SK-N-SH (cell line): ENCODE measurements at regions of chr3 and their contacts with region 1.

Region 1: DNA sequence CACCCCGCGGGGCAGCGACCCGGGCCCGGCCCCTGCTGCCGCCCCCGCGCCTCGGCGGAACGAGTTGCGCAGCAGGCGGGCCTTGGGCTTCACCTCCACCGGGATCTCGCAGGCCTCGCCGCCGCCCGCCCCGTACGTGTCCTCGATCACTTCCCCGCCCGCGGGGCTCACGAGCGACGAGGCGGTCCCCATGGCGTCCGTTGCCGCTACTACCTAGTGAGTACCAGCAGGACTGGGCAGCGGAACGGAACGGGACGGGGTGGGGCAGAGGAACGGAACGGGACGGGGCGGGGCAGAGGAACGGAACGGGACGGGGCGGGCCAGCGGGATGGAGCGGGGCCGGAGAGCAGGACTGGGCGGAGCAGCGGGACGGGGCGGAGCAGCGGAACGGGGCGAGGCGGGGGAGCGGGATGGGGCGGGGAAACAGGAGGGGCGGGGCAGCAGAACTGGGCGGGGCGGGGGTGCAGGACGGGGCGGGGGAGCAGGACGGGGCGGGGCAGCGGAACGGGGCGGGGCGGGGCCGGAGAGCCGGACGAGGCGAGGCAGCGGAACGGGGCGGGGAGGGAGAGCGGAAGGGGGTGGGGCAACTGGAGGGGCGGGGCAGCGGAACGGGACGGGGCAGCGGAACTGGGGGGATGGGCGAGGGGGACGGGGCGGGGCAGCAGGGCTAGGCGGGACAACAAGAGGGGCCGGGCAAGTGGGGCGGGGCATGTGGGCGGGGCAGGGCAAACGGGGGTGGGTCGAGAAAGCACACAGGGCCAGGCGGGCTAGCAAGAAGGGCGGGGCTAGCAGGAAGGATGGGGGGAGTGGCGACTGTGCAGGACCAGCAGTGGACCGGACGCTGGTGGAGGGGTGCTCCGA is at the start of gene NPHP3:
- DNase-seq: peak; percentile 98
- H3K4me3 ChIP-seq: peak within 1 kb of the TSS; percentile 83 to 84
- H3K27ac ChIP-seq: peak within 1 kb of the TSS; percentile 85 to 96
- H3K4me1 ChIP-seq: peaks cover 4 to 5% of the 10 kb centered on the region in 2 experiments; a peak in 3 of 4 replicates
- H3K27me3 ChIP-seq: no peaks in the 10 kb centered on the region
- CTCF ChIP-seq: no peak; the same call in 1 of the 2 replicates
- EP300 ChIP-seq: no peak
- RAD21 ChIP-seq: no peak
- polyA plus RNA-seq, gene NPHP3: 19.0 and 27.4 TPM in 2 replicates

Region 2: GRCh38 chr3:132738314-132738713 is 15.9 kb after region 1 on chr3:
- CTCF ChIA-PET with region 1: interaction called, 13 read pairs
- POLR2A ChIA-PET with region 1: no interaction called
- DNase-seq: no peak
- H3K4me3 ChIP-seq: no peak overlapping the region
- H3K27ac ChIP-seq: no peak overlapping the region
- H3K4me1 ChIP-seq: no peaks in the 10 kb centered on the region
- H3K27me3 ChIP-seq: 0 out of 2 replicates have a peak, but pooled peaks cover 6% of the 10 kb centered on the region
- CTCF ChIP-seq: no peak
- EP300 ChIP-seq: no peak
- RAD21 ChIP-seq: no peak

Region 3: DNA sequence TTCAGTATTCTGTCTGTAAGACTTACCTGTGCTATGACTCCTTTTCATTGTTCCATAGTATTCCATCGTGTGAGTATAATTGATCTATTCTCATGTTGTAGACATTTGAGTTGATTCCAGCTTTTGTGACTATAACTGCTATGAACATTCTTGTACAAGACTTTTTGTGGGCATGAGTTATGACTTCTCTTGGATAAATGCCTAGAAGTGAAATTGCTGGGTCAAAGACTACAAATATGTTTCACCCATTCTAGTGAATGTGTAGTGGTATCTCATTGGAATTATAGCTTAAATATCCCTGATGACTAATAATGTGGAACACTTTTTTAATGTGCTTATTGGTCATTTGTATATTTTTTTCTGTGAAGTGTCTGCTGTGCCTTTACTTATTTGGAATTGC is 27.4 kb after region 1 on chr3:
- CTCF ChIA-PET with region 1: interaction called, 10 read pairs
- POLR2A ChIA-PET with region 1: no interaction called
- DNase-seq: no peak
- H3K4me3 ChIP-seq: no peak overlapping the region
- H3K27ac ChIP-seq: no peak overlapping the region
- H3K4me1 ChIP-seq: no peaks in the 10 kb centered on the region
- H3K27me3 ChIP-seq: no peaks in the 10 kb centered on the region
- CTCF ChIP-seq: no peak
- EP300 ChIP-seq: no peak
- RAD21 ChIP-seq: no peak

Region 4: GRCh38 chr3:133384331-133385027 is 662.1 kb after region 1 on chr3:
- CTCF ChIA-PET with region 1: interaction called, 84 read pairs
- POLR2A ChIA-PET with region 1: no interaction called
- DNase-seq: peak; percentile 88
- H3K4me3 ChIP-seq: peak overlapping the region in 1 of 2 experiments; percentile 53; a peak in 1 of 4 replicates
- H3K27ac ChIP-seq: peak overlapping the region in 1 of 2 experiments; percentile 82; a peak in 2 of 4 replicates
- H3K4me1 ChIP-seq: peaks cover 0 to 53% of the 10 kb centered on the region in 2 experiments; a peak in 2 of 4 replicates
- H3K27me3 ChIP-seq: no peaks in the 10 kb centered on the region
- CTCF ChIP-seq: peak; percentile 88
- EP300 ChIP-seq: peak in 1 of 2 experiments; percentile 70; a peak in 2 of 4 replicates
- RAD21 ChIP-seq: peak; percentile 99

Region 5: GRCh38 chr3:133401374-133402135 is 679.2 kb after region 1 on chr3:
- CTCF ChIA-PET with region 1: interaction called, 12 read pairs
- POLR2A ChIA-PET with region 1: no interaction called
- DNase-seq: peak; percentile 77
- H3K4me3 ChIP-seq: no peak overlapping the region
- H3K27ac ChIP-seq: peak overlapping the region in 1 of 2 experiments; percentile 64; a peak in 2 of 4 replicates
- H3K4me1 ChIP-seq: peaks cover 0 to 22% of the 10 kb centered on the region in 2 experiments; a peak in 2 of 4 replicates
- H3K27me3 ChIP-seq: no peaks in the 10 kb centered on the region
- CTCF ChIP-seq: no peak
- EP300 ChIP-seq: no peak
- RAD21 ChIP-seq: no peak

Region 6: GRCh38 chr3:133426721-133427120 is 704.3 kb after region 1 on chr3:
- CTCF ChIA-PET with region 1: interaction called, 28 read pairs
- POLR2A ChIA-PET with region 1: no interaction called
- DNase-seq: no peak
- H3K4me3 ChIP-seq: no peak overlapping the region
- H3K27ac ChIP-seq: no peak overlapping the region
- H3K4me1 ChIP-seq: peaks cover 3 to 12% of the 10 kb centered on the region in 2 experiments; a peak in 2 of 4 replicates
- H3K27me3 ChIP-seq: no peaks in the 10 kb centered on the region
- CTCF ChIP-seq: no peak
- EP300 ChIP-seq: no peak
- RAD21 ChIP-seq: no peak